Right ventricle myocardium inferior (tissue), 1 donor: ENCODE measurements at regions of chr1 and their contacts with region 1.

Region 1: DNA sequence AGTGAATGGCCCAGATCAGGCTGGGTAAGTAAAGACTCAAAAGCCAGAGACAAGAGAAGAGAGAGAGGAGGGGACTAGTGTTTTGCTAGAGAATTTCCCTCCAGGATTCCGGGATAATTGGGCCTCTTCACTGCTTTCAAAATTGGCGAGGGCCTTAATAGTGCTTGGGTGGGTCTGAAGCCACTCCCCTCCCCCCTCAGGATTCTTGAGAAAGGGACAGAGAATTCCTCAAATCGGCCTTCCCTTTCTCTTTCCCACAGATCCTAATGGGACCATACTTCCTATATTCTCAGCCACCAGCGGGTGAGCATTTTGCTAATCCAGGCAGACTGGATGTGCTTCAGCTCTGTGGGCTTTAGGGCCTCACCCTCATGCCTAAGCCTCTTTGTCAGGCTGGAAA is 11.9 kb downstream of the SFN start:
- DNase-seq: no peak
- ATAC-seq: no peak

Region 2: GRCh38 chr1:26602378-26602959 is 272.4 kb before region 1 on chr1:
- intact Hi-C with region 1: loop called (anchors 1 kb)
- DNase-seq: no peak
- ATAC-seq: no peak

Region 3: DNA sequence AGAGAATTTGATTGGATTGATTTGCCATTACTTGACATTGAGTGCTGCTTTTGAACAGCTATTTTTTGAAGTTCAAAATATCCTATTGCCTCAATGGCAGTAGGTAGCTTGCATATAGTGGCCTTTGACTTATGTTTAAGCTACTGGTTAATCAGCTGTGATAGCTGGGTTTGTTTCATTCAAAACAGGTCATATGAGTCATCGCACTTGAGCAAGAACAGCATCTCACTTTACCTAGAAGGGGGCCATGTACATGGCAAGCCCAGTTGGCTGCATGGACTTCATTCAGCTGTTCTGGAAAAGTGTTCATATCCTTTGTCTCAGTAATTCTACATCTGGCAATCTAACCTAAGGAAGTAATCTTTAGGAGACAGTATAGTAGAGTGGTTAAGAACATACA is 208.0 kb before region 1 on chr1:
- intact Hi-C with region 1: no loop called
- DNase-seq: no peak
- ATAC-seq: no peak

Region 4: DNA sequence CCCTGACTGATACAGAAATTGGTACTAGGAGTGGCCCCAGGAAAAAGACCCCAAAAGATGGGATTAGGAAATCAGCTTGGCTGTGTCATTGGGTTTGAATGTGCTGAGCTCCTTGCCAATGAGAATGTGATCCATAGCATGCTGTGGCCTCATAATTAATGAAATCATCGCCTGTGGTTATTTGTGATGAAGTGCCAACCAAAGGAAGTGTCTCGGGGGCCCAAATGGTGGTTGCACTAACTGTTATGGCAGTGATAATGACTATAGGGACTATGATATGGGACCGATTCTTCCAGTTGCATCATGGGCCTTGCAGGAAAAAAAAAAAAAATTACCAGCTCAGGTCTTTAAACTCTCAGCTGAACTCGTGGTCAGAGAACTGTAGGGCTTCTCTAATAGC is 63.8 kb before region 1 on chr1:
- intact Hi-C with region 1: loop called (anchors 2 kb)
- DNase-seq: no peak
- ATAC-seq: no peak

Region 5: DNA sequence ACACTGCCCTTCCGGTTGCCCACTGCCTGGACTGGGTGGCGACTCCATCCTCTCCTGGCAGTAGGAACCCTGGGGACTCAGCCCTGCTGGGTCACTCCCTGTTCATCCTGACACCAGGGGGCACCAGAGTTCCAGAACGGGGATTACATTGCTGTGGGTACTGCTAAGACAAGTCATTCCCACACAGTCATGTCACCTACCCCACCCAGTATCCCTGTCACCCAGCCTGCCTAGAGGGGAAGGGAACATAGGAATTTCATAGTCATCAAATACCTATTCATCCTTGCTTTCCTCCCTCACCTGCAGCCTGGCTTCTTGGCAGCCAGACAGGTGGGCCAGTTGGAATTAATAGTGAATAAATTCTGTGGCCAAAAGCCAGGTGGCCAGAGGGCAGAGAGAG is 21.7 kb before region 1 on chr1:
- intact Hi-C with region 1: loop called (anchors 1 kb)
- DNase-seq: peak; percentile 87
- ATAC-seq: peak; percentile 85